ENCODE measurements at regions of chr14 and their contacts with region 1.

Region 1: DNA sequence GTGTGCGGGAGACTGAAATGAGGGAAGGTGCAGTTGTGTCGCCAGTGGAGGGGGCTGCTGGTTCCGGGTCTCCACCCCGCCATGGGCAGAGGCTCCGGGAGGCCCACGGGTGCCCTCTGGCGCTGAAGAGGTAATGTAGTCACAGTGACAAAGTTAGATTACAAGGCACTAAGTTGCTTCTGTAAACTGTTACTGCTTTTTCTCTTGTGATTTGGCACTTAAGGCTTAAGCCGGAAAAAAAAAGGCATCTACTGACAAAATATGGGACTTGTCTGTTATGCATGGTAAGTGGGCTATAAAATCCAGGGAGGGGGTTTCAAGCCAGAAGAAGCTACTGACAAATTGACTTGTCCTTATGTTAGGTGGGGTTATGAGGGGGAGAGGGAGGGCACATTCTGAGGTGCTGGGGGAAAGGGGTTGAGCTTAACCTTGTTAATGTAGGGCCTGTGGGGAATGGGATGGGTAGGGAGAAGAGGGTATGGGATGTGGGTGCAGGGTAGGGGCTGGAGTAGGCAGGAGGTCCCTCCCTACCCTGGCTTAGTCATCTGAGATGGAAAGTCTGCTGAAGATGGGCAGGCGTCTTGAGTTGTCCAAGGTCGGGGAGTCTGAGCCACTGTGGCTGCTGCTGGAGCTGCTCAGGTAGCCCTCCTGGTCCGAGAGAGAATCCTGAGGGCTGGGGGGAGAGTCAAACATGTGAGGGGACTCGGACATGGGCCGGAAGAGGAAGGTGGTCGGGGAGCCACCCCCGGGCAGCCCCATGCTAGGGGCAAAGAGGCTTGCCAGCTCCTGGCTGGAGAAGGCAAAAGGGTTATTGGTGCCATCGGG is 3.7 kb downstream of the ZFP36L1 start:
- DNase-seq: peak; percentile 91
- H3K4me3 Mint-ChIP-seq: peak overlapping the region; percentile 89
- H3K27ac Mint-ChIP-seq: peak overlapping the region; percentile 99
- H3K4me1 Mint-ChIP-seq: peaks cover 50% of the 10 kb centered on the region
- H3K27me3 Mint-ChIP-seq: no peaks in the 10 kb centered on the region

Region 2: GRCh38 chr14:67816326-67817002 is 972.7 kb before region 1 on chr14 and contains the start of gene ZFYVE26:
- CTCF ChIA-PET with region 1: no interaction called
- POLR2A ChIA-PET with region 1: no interaction called
- intact Hi-C with region 1: loop called (anchors 5 kb)
- DNase-seq: peak; percentile 95
- H3K4me3 Mint-ChIP-seq: peak within 1 kb of the TSS; percentile 93
- H3K27ac Mint-ChIP-seq: peak within 1 kb of the TSS; percentile 90
- H3K4me1 Mint-ChIP-seq: peaks cover 50% of the 10 kb centered on the region
- H3K27me3 Mint-ChIP-seq: no peaks in the 10 kb centered on the region
- total RNA-seq, gene ZFYVE26: 12.5 to 12.6 TPM

Region 3: GRCh38 chr14:68377459-68377858 is 411.7 kb before region 1 on chr14:
- CTCF ChIA-PET with region 1: interaction called, 3 read pairs
- POLR2A ChIA-PET with region 1: no interaction called
- intact Hi-C with region 1: loop called (anchors 10 kb)
- DNase-seq: no peak
- H3K4me3 Mint-ChIP-seq: no peak overlapping the region
- H3K27ac Mint-ChIP-seq: no peak overlapping the region
- H3K4me1 Mint-ChIP-seq: peaks cover 35% of the 10 kb centered on the region
- H3K27me3 Mint-ChIP-seq: no peaks in the 10 kb centered on the region

Region 4: DNA sequence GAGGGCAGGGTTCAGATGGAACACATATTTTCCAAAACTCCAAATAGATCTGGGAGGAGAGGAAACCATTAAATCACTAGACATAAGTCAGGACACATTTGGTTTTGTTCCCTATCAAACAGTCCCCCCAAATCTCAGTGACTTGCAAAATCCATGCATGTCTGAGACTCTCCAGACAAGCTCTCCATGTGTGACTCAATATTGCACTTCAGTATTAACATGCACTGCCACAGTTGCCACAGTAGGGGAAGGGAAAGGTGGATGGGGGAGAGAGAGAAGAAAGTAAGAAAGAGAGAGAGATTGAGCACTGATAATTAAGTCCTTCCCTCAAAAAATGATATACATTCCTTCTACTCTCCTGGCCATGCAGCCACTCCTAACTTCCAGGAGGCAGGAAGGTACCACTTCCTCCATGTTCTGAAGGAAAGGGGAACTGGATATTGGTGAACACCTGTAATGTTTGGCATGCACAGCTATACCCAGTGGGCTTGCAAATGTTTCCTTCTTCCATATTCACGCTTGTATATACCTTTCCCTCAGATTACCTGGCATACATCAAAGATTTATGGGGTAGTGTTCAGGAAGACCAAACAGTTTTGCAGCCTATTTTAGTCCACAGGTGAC is 306.3 kb before region 1 on chr14:
- CTCF ChIA-PET with region 1: no interaction called
- POLR2A ChIA-PET with region 1: interaction called, 5 read pairs
- intact Hi-C with region 1: loop called (anchors 5 kb)
- DNase-seq: no peak
- H3K4me3 Mint-ChIP-seq: no peak overlapping the region
- H3K27ac Mint-ChIP-seq: no peak overlapping the region
- H3K4me1 Mint-ChIP-seq: peaks cover 42% of the 10 kb centered on the region
- H3K27me3 Mint-ChIP-seq: no peaks in the 10 kb centered on the region

Region 5: GRCh38 chr14:68663385-68664076 is 125.7 kb before region 1 on chr14:
- CTCF ChIA-PET with region 1: interaction called, 20 read pairs
- POLR2A ChIA-PET with region 1: interaction called, 26 read pairs
- intact Hi-C with region 1: loop called (anchors 2 kb)
- DNase-seq: peak; percentile 72
- H3K4me3 Mint-ChIP-seq: peak overlapping the region; percentile 24
- H3K27ac Mint-ChIP-seq: peak overlapping the region; percentile 71
- H3K4me1 Mint-ChIP-seq: peaks cover 47% of the 10 kb centered on the region
- H3K27me3 Mint-ChIP-seq: no peaks in the 10 kb centered on the region

Region 6: DNA sequence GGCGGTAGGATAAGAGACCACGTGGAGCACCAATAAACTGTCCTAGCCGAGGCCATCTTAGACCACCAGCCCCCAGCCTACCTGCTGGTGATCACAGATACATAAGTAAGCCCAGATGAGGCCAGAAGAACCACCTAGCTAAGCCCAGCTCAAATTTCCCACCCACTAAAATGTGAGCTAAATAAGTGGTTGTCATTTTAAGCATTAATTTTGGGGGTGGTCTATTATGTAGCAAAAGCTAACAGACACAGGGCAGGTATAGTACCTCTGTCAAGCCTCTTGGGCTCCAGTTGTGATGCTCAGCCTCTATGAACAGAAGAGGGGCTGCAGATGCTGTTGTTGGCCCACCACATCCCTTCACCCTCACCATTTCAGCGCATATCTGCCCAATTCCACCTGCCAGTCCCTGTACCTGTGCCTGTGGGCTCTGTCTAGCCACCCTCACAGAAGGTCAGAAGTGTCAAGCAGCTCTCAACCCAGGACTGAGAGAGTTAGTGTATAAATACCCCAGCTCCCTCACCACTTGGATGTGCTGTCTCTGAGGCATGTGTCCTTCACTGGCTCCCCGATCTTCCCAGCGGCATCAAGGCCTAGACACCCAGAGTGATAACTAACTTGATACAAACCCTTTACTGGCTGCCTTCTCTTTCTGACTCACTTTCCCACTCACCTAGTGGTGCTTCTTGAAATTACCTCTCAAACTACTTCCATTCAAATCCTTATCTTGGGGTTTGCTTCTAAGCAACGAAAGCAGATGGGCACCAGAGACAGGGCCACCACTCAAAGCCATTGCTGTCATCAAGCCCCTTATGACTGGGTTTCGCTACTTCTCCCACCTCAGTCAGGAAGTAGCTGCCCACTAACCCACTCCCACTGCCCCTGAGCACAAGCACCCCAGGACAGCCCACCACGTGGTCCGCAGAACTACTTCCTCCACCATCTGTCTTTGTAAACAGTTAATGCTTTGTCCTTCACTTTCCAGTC is 13.8 kb before region 1 on chr14:
- CTCF ChIA-PET with region 1: interaction called, 52 read pairs
- POLR2A ChIA-PET with region 1: interaction called, 106 read pairs
- intact Hi-C with region 1: loop called (anchors 2 kb)
- DNase-seq: no peak
- H3K4me3 Mint-ChIP-seq: no peak overlapping the region
- H3K27ac Mint-ChIP-seq: peak overlapping the region; percentile 6
- H3K4me1 Mint-ChIP-seq: peaks cover 75% of the 10 kb centered on the region
- H3K27me3 Mint-ChIP-seq: no peaks in the 10 kb centered on the region

Measured in activated CD4-positive, alpha-beta memory T cell treated with anti-CD3 and anti-CD28 coated beads for 36 hours (primary cell).